ENCODE measurements at regions of chr17 and their contacts with region 1.

Region 1: DNA sequence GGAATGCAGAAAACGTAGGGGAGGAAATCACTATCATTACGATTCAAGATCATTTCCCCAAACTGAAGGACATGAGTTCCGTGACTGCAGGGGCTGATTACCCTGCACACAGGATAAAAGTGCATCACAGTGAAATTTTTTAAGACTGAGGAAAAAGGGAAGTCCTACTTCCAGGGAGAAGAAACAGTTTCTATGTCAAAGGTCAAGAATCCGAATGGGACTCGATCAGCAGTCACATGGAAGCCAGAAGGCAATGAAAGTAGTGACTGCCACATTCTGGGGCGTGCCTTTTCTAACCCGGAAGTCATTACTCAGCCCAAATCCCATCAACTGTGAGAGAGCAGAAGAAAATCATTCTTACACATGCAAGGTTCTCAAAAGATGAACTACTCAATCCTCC is 12.1 kb downstream of the ZZEF1 start:
- DNase-seq: no peak
- ATAC-seq: no peak
- H3K4me3 ChIP-seq: no peak overlapping the region
- H3K27ac ChIP-seq: no peak overlapping the region
- H3K4me1 ChIP-seq: no peaks in the 10 kb centered on the region
- H3K27me3 ChIP-seq: no peaks in the 10 kb centered on the region
- CTCF ChIP-seq: no peak

Region 2: DNA sequence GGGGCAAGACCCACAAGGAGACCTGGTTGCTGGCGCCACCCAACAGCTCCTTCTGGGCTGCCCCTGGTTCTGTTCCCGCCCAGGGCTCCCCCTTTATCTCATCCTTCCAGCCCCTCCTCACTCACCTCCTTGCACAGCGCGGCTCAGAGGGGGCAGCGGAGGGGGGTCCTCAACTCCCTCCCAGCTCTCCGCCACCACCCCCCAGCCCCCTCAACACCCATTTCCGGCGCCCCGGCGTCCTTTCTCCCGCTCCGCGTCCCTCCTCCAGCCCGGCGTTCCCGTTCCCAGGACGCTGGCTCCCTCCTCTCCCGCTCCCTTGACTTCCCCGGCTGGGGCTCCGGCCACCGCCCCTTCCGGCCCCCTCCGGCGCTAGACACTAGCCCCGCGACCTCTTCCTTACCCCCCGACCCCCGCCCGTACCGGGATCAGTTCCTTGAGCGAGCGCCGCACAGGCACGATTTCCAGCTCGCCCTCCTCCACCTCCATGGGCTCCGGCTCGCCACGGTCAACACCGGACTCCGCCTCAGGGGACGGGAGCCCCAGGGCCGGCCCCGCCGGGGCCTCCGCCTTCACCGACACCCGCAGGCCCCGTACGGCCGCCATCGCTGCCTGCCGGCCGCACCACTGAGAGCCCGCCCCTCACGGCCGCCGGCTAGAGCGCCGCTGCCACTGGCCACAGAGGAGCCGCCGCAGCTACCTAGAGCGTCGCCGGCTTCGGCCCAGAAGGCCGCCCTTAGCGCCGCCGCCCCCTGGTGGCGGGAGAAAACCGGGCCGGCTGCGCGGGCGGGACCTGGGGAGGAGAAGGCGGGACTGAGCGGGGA is 284.9 kb before region 1 on chr17 and contains the start of gene NCBP3:
- CTCF ChIA-PET with region 1: no interaction called
- POLR2A ChIA-PET with region 1: no interaction called
- intact Hi-C with region 1: no loop called
- DNase-seq: peak; percentile 91
- ATAC-seq: peak; percentile 97
- H3K4me3 ChIP-seq: peak within 1 kb of the TSS; percentile 94
- H3K27ac ChIP-seq: 0 out of 2 replicates have a peak within 1 kb of the TSS, but pooled peaks have one; percentile 25
- H3K4me1 ChIP-seq: no peaks in the 10 kb centered on the region
- H3K27me3 ChIP-seq: no peaks in the 10 kb centered on the region
- CTCF ChIP-seq: peak; percentile 75
- total RNA-seq, gene NCBP3: 17.3 and 21.0 TPM in 2 replicates

Region 3: GRCh38 chr17:4187076-4187475 is 56.4 kb after region 1 on chr17:
- CTCF ChIA-PET with region 1: no interaction called
- POLR2A ChIA-PET with region 1: interaction called, 18 read pairs
- intact Hi-C with region 1: no loop called
- DNase-seq: no peak
- ATAC-seq: no peak
- H3K4me3 ChIP-seq: no peak overlapping the region
- H3K27ac ChIP-seq: no peak overlapping the region
- H3K4me1 ChIP-seq: no peaks in the 10 kb centered on the region
- H3K27me3 ChIP-seq: no peaks in the 10 kb centered on the region
- CTCF ChIP-seq: no peak